ENCODE measurements at regions of chr4 and their contacts with region 1.

Region 1: GRCh38 chr4:152735396-152735859 is 44.1 kb downstream of the TIGD4 start:
- DNase-seq: peak; percentile 72
- H3K4me3 ChIP-seq: no peak overlapping the region
- H3K27ac ChIP-seq: no peak overlapping the region
- H3K4me1 ChIP-seq: no peaks in the 10 kb centered on the region
- CTCF ChIP-seq: peak; percentile 93

Region 2: GRCh38 chr4:152408514-152409327 is 326.7 kb before region 1 on chr4:
- CTCF ChIA-PET with region 1: no interaction called
- POLR2A ChIA-PET with region 1: no interaction called
- intact Hi-C with region 1: loop called (anchors 5 kb)
- DNase-seq: peak; percentile 44
- H3K4me3 ChIP-seq: no peak overlapping the region
- H3K27ac ChIP-seq: no peak overlapping the region
- H3K4me1 ChIP-seq: no peaks in the 10 kb centered on the region
- CTCF ChIP-seq: peak; percentile 87

Region 3: DNA sequence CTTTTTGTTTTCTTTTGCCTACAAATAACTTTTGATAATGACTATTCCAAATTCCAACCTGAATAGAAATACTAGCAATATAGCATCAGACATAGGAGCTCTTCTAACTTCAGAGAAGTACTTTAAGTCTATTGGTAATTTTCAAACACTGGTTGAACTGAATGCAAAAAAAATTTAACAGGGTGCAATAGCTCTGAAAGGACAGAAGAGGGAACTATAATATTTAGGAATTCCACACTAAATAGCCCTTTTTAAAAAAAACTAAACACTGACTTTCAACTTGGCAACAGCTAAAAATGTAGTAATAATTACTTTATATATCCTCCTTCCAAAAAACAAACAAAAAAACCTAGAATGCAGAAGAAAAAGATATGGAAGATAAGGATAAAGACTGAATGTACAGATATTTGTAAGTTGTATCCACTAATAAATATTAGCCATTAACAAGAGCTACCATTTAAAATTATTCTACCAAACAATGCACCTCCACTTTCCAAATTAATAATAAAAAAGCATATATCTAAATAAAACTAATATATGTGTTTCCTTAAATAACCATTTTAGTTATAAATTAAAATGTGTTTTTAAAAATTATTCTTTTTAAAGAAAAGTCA is 280.9 kb before region 1 on chr4:
- CTCF ChIA-PET with region 1: interaction called, 3 read pairs
- POLR2A ChIA-PET with region 1: interaction called, 3 read pairs
- intact Hi-C with region 1: loop called (anchors 1 kb)
- DNase-seq: peak; percentile 47
- H3K4me3 ChIP-seq: no peak overlapping the region
- H3K27ac ChIP-seq: no peak overlapping the region
- H3K4me1 ChIP-seq: peaks cover 35% of the 10 kb centered on the region
- CTCF ChIP-seq: peak; percentile 95

Region 4: GRCh38 chr4:152679414-152680281 is 55.8 kb before region 1 on chr4 and contains the start of gene TMEM154:
- CTCF ChIA-PET with region 1: interaction called, 4 read pairs
- POLR2A ChIA-PET with region 1: interaction called, 18 read pairs
- intact Hi-C with region 1: loop called (anchors 1 kb)
- DNase-seq: peak; percentile 91
- H3K4me3 ChIP-seq: peak within 1 kb of the TSS; percentile 72
- H3K27ac ChIP-seq: peak within 1 kb of the TSS; percentile 63
- H3K4me1 ChIP-seq: peaks cover 85% of the 10 kb centered on the region
- CTCF ChIP-seq: no peak
- total RNA-seq, gene TMEM154: 16.1 and 17.6 TPM in 2 replicates

Measured in OCI-LY7 (cell line).